ENCODE measurements at regions of chr6 and their contacts with region 1.

Region 1: DNA sequence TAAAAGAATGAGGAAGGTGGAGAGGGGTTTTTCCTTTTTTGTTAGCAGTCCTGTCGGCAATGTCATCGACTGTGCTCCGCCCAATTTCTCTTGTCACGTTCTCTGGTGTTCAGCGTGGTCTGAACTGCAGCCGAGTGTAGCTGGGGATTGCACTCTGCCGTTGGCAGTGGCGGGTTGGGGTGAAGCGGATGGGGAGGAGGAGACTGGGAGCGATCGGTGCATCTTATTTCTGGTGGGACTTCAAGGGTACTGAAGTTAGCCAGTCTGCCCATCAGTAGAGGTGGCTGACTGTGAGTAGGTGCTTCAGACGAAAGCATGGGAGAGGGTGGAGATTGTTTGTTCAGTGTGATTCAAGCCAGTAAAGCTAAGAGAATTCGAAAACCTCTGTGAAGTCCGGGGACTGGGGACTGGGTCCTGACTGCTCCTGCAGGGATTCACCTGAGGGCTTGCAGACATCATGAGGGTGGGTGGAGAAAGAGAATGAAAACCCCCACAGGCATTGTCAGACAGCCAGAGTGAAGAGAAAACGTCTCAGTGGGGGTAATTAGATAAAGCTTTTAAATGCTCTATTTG is 5.1 kb downstream of the RREB1 start:
- DNase-seq: peak; percentile 41
- ATAC-seq: peak; percentile 55
- H3K4me3 ChIP-seq: peak overlapping the region; percentile 72
- H3K27ac ChIP-seq: peak overlapping the region; percentile 36
- H3K4me1 ChIP-seq: peaks cover 28% of the 10 kb centered on the region
- H3K27me3 ChIP-seq: no peaks in the 10 kb centered on the region
- CTCF ChIP-seq: no peak
- EP300 ChIP-seq: no peak
- POLR2A ChIP-seq: peak; percentile 34; the same call in 1 of the 2 replicates
- RAD21 ChIP-seq: no peak

Region 2: DNA sequence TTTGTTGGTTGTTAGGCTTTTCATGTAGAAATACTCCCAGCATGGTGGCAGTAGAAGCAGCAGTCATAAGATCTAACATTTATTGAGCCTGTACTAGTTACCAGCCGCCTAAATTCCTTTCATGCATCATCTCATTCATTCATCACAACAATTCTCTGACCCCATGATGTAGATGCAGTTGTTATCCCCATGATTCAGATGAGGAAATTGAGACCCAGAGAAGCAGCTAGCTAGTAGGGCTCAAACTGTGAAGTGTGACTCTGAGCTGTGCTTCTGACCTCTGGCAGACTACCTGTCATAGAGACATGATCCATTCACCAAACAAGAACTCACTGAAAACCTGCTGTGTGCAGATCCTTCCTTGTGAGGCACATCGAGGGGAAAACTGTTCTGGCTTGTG is 11.8 kb after region 1 on chr6:
- CTCF ChIA-PET with region 1: interaction called, 8 read pairs
- POLR2A ChIA-PET with region 1: interaction called, 17 read pairs
- RAD21 ChIA-PET with region 1: no interaction called
- SMC1A ChIA-PET with region 1: interaction called, 13 read pairs
- in situ Hi-C with region 1: no loop called
- intact Hi-C with region 1: no loop called
- DNase-seq: no peak
- ATAC-seq: no peak
- H3K4me3 ChIP-seq: no peak overlapping the region
- H3K27ac ChIP-seq: no peak overlapping the region
- H3K4me1 ChIP-seq: peaks cover 24% of the 10 kb centered on the region
- H3K27me3 ChIP-seq: no peaks in the 10 kb centered on the region
- CTCF ChIP-seq: no peak
- EP300 ChIP-seq: no peak
- POLR2A ChIP-seq: no peak
- RAD21 ChIP-seq: no peak

Region 3: GRCh38 chr6:7129784-7130569 is 17.1 kb after region 1 on chr6:
- CTCF ChIA-PET with region 1: interaction called, 8 read pairs
- POLR2A ChIA-PET with region 1: interaction called, 17 read pairs
- RAD21 ChIA-PET with region 1: interaction called, 62 read pairs
- SMC1A ChIA-PET with region 1: interaction called, 94 read pairs
- in situ Hi-C with region 1: no loop called
- intact Hi-C with region 1: loop called (anchors 2 kb)
- DNase-seq: no peak
- ATAC-seq: peak; percentile 31
- H3K4me3 ChIP-seq: no peak overlapping the region
- H3K27ac ChIP-seq: peak overlapping the region; percentile 43; the same call in 1 of the 2 replicates
- H3K4me1 ChIP-seq: peaks cover 57% of the 10 kb centered on the region
- H3K27me3 ChIP-seq: no peaks in the 10 kb centered on the region
- CTCF ChIP-seq: no peak
- EP300 ChIP-seq: no peak
- POLR2A ChIP-seq: no peak
- RAD21 ChIP-seq: no peak

Region 4: GRCh38 chr6:7135755-7136154 is 22.9 kb after region 1 on chr6:
- CTCF ChIA-PET with region 1: interaction called, 18 read pairs
- POLR2A ChIA-PET with region 1: interaction called, 16 read pairs
- RAD21 ChIA-PET with region 1: interaction called, 62 read pairs
- SMC1A ChIA-PET with region 1: interaction called, 94 read pairs
- in situ Hi-C with region 1: no loop called
- intact Hi-C with region 1: loop called (anchors 2 kb)
- DNase-seq: no peak
- ATAC-seq: peak; percentile 64
- H3K4me3 ChIP-seq: peak overlapping the region; percentile 41
- H3K27ac ChIP-seq: peak overlapping the region; percentile 88
- H3K4me1 ChIP-seq: peaks cover 77% of the 10 kb centered on the region
- H3K27me3 ChIP-seq: no peaks in the 10 kb centered on the region
- CTCF ChIP-seq: no peak
- EP300 ChIP-seq: 0 out of 4 replicates have a peak, but pooled peaks of 1 of the 2 experiments have one; percentile 18
- POLR2A ChIP-seq: no peak
- RAD21 ChIP-seq: no peak

Region 5: DNA sequence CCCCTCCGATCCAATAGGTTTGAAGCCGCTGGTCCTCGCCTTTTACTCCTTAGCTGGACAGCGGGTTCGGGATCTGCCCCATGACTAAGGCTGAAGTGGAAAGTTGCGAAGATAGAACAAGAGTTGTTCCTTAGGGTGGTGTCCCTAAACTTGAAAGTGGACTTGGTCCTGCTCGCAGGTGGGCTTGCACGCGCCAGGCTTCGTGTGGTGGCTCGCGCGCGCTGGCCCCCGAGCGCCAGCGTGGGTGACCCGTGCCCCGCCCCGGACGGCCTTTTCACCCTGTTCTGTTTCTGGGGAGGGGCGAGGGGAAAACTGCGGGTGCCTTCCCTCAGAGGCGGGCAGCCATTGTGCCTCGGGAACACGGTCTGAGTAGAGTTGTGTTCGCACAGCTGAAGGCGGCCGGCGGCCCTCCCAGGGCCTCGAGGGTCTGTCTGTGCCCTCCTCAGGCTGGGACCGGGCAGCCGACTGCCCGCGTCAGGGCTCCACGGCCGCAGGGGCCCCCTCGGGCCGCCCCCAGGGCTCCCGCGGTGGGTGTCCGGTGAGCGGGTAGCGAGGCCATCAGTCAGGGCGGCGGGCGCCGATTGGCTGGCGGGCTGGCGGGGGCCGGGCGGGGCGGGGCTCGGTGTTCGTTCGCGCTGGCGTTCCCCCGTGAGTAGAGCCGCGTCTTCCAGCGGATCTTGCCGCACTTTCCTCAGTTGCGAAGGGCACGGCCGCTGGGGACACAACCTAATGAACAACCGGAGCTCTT is 28.0 kb after region 1 on chr6:
- CTCF ChIA-PET with region 1: interaction called, 18 read pairs
- POLR2A ChIA-PET with region 1: interaction called, 16 read pairs
- RAD21 ChIA-PET with region 1: interaction called, 62 read pairs
- SMC1A ChIA-PET with region 1: interaction called, 94 read pairs
- in situ Hi-C with region 1: no loop called
- intact Hi-C with region 1: no loop called
- DNase-seq: no peak
- ATAC-seq: peak; percentile 74
- H3K4me3 ChIP-seq: peak overlapping the region; percentile 81
- H3K27ac ChIP-seq: peak overlapping the region; percentile 87
- H3K4me1 ChIP-seq: peaks cover 85% of the 10 kb centered on the region
- H3K27me3 ChIP-seq: no peaks in the 10 kb centered on the region
- CTCF ChIP-seq: no peak
- EP300 ChIP-seq: no peak
- POLR2A ChIP-seq: peak; percentile 82
- RAD21 ChIP-seq: no peak

Region 6: GRCh38 chr6:7166410-7167305 is 53.8 kb after region 1 on chr6:
- CTCF ChIA-PET with region 1: no interaction called
- POLR2A ChIA-PET with region 1: interaction called, 10 read pairs
- RAD21 ChIA-PET with region 1: no interaction called
- SMC1A ChIA-PET with region 1: interaction called, 3 read pairs
- in situ Hi-C with region 1: no loop called
- intact Hi-C with region 1: no loop called
- DNase-seq: no peak
- ATAC-seq: no peak
- H3K4me3 ChIP-seq: no peak overlapping the region
- H3K27ac ChIP-seq: no peak overlapping the region
- H3K4me1 ChIP-seq: peaks cover 21% of the 10 kb centered on the region
- H3K27me3 ChIP-seq: no peaks in the 10 kb centered on the region
- CTCF ChIP-seq: no peak
- EP300 ChIP-seq: no peak
- POLR2A ChIP-seq: no peak
- RAD21 ChIP-seq: no peak

Region 7: GRCh38 chr6:7697820-7698623 is 585.2 kb after region 1 on chr6:
- CTCF ChIA-PET with region 1: no interaction called
- POLR2A ChIA-PET with region 1: no interaction called
- RAD21 ChIA-PET with region 1: no interaction called
- SMC1A ChIA-PET with region 1: no interaction called
- in situ Hi-C with region 1: no loop called
- intact Hi-C with region 1: no loop called
- DNase-seq: no peak
- ATAC-seq: peak; percentile 45
- H3K4me3 ChIP-seq: no peak overlapping the region
- H3K27ac ChIP-seq: no peak overlapping the region
- H3K4me1 ChIP-seq: no peaks in the 10 kb centered on the region
- H3K27me3 ChIP-seq: no peaks in the 10 kb centered on the region; a peak in 3 of 4 replicates
- CTCF ChIP-seq: no peak
- EP300 ChIP-seq: no peak
- POLR2A ChIP-seq: no peak
- RAD21 ChIP-seq: no peak